Esophagus muscularis mucosa (tissue), 4 donors: ENCODE measurements at regions of chr18 and their contacts with region 1.

Region 1: GRCh38 chr18:46073474-46074331 is 1.6 kb upstream of the PSTPIP2 start:
- DNase-seq: peak; percentile 93
- H3K4me3 ChIP-seq: no peak overlapping the region
- H3K27ac ChIP-seq: no peak overlapping the region
- H3K4me1 ChIP-seq: peaks cover 14 to 41% (median 34%) of the 10 kb centered on the region in 4 donors
- H3K27me3 ChIP-seq: no peaks in the 10 kb centered on the region
- CTCF ChIP-seq: peak; percentile 65 to 72 (median 70)
- EP300 ChIP-seq: no peak
- POLR2A ChIP-seq: no peak

Region 2: DNA sequence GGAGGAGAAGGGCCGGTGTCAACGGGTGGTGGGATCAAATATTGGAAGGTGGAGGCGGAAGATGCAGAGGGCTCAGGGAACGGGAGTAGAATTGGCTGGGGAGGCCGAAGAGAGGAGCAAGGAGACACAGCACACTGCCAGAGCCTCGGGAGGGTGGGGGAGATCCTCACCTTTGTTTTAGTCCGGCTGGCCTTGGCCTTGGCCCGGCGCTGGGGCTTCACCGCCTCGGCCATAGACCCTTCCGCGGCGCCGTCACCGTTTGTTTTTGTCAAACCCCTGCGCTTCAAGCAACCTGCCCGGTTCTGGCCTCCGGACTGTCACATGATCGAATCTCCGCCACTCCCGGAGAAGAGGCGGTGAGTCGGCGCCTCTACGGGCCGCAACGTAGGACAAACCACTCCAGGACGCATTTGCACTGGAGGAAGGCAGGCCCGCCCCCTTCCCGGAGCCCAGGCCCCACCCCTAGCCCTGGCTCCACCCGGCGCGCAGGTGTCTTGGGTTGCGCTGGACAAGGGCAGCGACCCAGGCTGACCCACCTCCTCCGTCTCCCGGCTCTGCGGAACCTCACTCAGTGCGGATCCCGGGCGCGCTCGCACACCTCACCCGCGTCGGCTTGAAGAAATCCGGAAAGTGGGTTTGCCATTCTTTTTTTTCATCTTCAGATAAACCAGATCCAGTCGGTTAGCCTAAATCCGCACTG is 106.5 kb before region 1 on chr18 and contains the start of gene EPG5:
- intact Hi-C with region 1: loop called (anchors 2 kb)
- DNase-seq: peak; percentile 98
- H3K4me3 ChIP-seq: peak within 1 kb of the TSS; percentile 78 to 88 (median 84)
- H3K27ac ChIP-seq: peak within 1 kb of the TSS; percentile 68 to 82 (median 76)
- H3K4me1 ChIP-seq: peaks cover 23 to 33% (median 26%) of the 10 kb centered on the region in 4 donors
- H3K27me3 ChIP-seq: no peaks in the 10 kb centered on the region
- CTCF ChIP-seq: peak in 1 of 3 experiments; percentile 16
- EP300 ChIP-seq: no peak
- POLR2A ChIP-seq: no peak
- total RNA-seq, gene EPG5: 20.4 to 34.3 (median 28.2) TPM

Region 3: DNA sequence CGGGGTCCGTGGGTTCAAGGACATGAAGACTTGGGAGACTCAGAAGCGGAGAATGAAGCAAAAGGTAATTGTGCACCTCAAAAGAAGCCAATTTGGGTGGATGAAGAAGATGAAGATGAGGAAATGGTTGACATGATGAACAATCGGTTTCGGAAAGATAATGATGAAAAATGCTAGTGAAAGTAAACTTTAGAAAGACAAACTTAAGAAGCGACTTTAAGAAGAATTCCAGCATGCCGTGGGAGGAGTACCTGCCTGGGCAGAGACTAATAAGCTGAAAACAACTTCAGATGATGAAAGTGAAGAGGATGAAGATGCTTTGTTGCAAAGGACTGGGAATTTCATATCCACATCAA is 45.2 kb before region 1 on chr18:
- intact Hi-C with region 1: loop called (anchors 5 kb)
- DNase-seq: no peak
- H3K4me3 ChIP-seq: peak overlapping the region; percentile 54 to 73 (median 60)
- H3K27ac ChIP-seq: peak overlapping the region; percentile 54 to 80 (median 78)
- H3K4me1 ChIP-seq: peaks cover 4 to 15% (median 11%) of the 10 kb centered on the region in 4 donors
- H3K27me3 ChIP-seq: no peaks in the 10 kb centered on the region
- CTCF ChIP-seq: no peak
- EP300 ChIP-seq: no peak
- POLR2A ChIP-seq: no peak